CD4-positive, alpha-beta T cell (primary cell): ENCODE measurements at regions of chr7 and their contacts with region 1.

Region 1: DNA sequence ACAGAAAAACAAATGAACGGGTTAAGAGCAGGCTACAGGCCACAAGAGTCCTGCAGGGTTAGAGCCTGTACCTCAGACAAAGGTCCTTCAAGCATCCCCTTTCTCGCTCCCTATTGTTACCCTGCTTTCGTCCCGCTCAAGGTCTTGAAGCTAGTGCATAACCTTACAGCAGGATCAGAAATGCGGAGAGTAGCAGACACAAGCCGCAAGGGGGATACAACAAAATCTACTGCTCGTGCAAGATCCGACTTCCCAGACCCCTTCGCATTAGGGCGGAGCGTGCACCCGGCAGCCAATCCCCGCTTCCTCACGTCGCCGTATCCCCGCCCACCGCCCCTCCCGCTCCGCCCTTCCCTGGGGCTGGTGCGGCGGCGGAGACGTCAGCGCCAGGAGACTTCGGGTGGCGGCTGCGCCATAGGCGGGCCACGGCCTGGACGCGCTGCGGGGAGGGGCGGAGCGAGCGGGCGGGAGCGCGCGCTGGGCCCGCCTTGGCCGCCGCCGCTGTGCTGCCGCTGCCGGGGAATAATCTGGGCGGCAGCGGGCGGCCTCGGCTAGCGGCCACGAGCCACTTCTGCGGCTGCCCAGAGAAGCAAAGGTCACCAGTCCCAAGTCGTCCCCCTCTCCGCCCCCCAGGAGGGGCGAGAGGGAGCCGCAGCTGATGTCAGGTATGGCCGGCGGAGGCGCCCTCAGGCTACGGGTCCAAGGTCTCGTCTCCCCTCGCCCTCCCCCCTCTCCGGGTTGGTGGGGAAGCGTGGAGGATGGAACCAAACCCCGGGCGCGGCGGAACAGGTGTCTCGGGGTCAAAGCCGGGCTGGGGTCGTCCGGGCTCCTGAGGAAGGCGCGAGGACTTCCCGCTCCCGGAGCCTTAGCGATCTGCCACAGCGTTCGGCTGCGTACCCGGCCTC is at the start of gene C1GALT1:
- DNase-seq: peak; percentile 97 to 100 (median 98)
- ATAC-seq: peak; percentile 84
- H3K4me3 ChIP-seq: peak within 1 kb of the TSS; percentile 95
- H3K4me3 Mint-ChIP-seq: peak within 1 kb of the TSS; percentile 94
- H3K27ac ChIP-seq: peak within 1 kb of the TSS; percentile 89 to 91
- H3K27ac Mint-ChIP-seq: no peak within 1 kb of the TSS
- H3K4me1 ChIP-seq: peaks cover 28% of the 10 kb centered on the region
- H3K4me1 Mint-ChIP-seq: peaks cover 8% of the 10 kb centered on the region
- H3K27me3 ChIP-seq: no peaks in the 10 kb centered on the region
- H3K27me3 Mint-ChIP-seq: no peaks in the 10 kb centered on the region
- CTCF ChIP-seq: peak; percentile 48
- total RNA-seq, gene C1GALT1: 49.4 to 51.9 TPM

Region 2: DNA sequence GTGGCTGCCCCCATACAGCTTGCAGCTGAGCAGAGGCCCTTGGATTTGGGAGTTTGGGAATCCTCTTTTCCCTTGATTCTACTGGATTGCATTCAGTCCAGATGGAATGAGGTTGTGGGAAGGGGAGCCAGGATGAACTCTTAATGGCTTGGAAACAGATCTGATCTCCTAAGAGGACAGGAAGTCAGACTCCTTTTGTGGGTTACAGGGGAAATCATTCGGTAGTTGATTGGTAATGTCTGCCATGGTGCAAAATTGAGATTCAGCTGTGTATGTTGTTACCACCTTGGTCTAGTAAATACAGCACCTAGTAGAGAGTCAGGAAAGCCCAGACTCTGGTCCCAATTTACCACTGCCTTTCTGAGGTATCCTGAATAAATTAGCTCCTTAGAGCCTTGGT is 1614.6 kb before region 1 on chr7:
- CTCF ChIA-PET with region 1: no interaction called
- POLR2A ChIA-PET with region 1: no interaction called
- intact Hi-C with region 1: no loop called
- DNase-seq: peak in 3 of 14 experiments; percentile 42 to 52 (median 42)
- ATAC-seq: no peak
- H3K4me3 ChIP-seq: no peak overlapping the region
- H3K4me3 Mint-ChIP-seq: peak overlapping the region; percentile 65
- H3K27ac ChIP-seq: no peak overlapping the region
- H3K27ac Mint-ChIP-seq: no peak overlapping the region
- H3K4me1 ChIP-seq: peaks cover 31% of the 10 kb centered on the region
- H3K4me1 Mint-ChIP-seq: peaks cover 30% of the 10 kb centered on the region
- H3K27me3 ChIP-seq: peaks cover 0 to 4% of the 10 kb centered on the region in 2 experiments
- H3K27me3 Mint-ChIP-seq: peaks cover 3% of the 10 kb centered on the region
- CTCF ChIP-seq: no peak

Region 3: DNA sequence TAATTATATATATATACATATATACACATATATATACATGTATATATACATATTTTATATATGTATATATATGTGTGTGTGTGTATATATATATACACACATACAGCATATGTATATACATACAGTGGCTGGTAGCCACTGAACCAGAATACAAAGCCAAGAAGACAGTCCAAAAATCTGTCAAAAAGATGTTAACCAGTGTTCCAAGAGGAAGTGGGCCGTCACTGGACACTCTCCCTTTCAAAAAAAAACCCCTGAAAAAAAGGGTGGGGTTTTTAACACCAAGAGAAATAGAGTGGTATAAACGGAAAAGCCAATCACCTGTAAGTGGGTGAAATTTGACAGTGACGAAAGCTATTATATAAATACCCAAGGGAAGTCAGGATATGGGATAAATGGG is 31.1 kb before region 1 on chr7:
- CTCF ChIA-PET with region 1: interaction called, 4 read pairs
- POLR2A ChIA-PET with region 1: interaction called, 18 read pairs
- intact Hi-C with region 1: loop called in 1 of 2 experiments (anchors 5 kb)
- DNase-seq: no peak
- ATAC-seq: no peak
- H3K4me3 ChIP-seq: no peak overlapping the region
- H3K4me3 Mint-ChIP-seq: no peak overlapping the region
- H3K27ac ChIP-seq: no peak overlapping the region
- H3K27ac Mint-ChIP-seq: no peak overlapping the region
- H3K4me1 ChIP-seq: peaks cover 5% of the 10 kb centered on the region
- H3K4me1 Mint-ChIP-seq: peaks cover 42% of the 10 kb centered on the region
- H3K27me3 ChIP-seq: no peaks in the 10 kb centered on the region
- H3K27me3 Mint-ChIP-seq: no peaks in the 10 kb centered on the region
- CTCF ChIP-seq: no peak

Region 4: GRCh38 chr7:7201578-7202374 is 19.4 kb after region 1 on chr7:
- CTCF ChIA-PET with region 1: interaction called, 9 read pairs
- POLR2A ChIA-PET with region 1: interaction called, 16 read pairs
- intact Hi-C with region 1: loop called in 1 of 2 experiments (anchors 1 kb)
- DNase-seq: peak; percentile 14 to 69 (median 32)
- ATAC-seq: peak; percentile 95
- H3K4me3 ChIP-seq: peak overlapping the region; percentile 17
- H3K4me3 Mint-ChIP-seq: peak overlapping the region; percentile 54
- H3K27ac ChIP-seq: peak overlapping the region; percentile 13 to 21
- H3K27ac Mint-ChIP-seq: peak overlapping the region; percentile 80
- H3K4me1 ChIP-seq: peaks cover 15% of the 10 kb centered on the region
- H3K4me1 Mint-ChIP-seq: peaks cover 90% of the 10 kb centered on the region
- H3K27me3 ChIP-seq: no peaks in the 10 kb centered on the region
- H3K27me3 Mint-ChIP-seq: no peaks in the 10 kb centered on the region
- CTCF ChIP-seq: no peak

Region 5: GRCh38 chr7:7242899-7243298 is 60.5 kb after region 1 on chr7:
- CTCF ChIA-PET with region 1: interaction called, 3 read pairs
- POLR2A ChIA-PET with region 1: interaction called, 3 read pairs
- intact Hi-C with region 1: loop called in 1 of 2 experiments (anchors 5 kb)
- DNase-seq: no peak
- ATAC-seq: no peak
- H3K4me3 ChIP-seq: no peak overlapping the region
- H3K4me3 Mint-ChIP-seq: no peak overlapping the region
- H3K27ac ChIP-seq: no peak overlapping the region
- H3K27ac Mint-ChIP-seq: no peak overlapping the region
- H3K4me1 ChIP-seq: no peaks in the 10 kb centered on the region
- H3K4me1 Mint-ChIP-seq: peaks cover 70% of the 10 kb centered on the region
- H3K27me3 ChIP-seq: no peaks in the 10 kb centered on the region
- H3K27me3 Mint-ChIP-seq: no peaks in the 10 kb centered on the region
- CTCF ChIP-seq: no peak

Region 6: GRCh38 chr7:7542251-7542835 is 359.9 kb after region 1 on chr7:
- CTCF ChIA-PET with region 1: no interaction called
- POLR2A ChIA-PET with region 1: interaction called, 3 read pairs
- intact Hi-C with region 1: loop called (anchors 1 to 2 kb)
- DNase-seq: no peak
- ATAC-seq: no peak
- H3K4me3 ChIP-seq: no peak overlapping the region
- H3K4me3 Mint-ChIP-seq: no peak overlapping the region
- H3K27ac ChIP-seq: no peak overlapping the region
- H3K27ac Mint-ChIP-seq: no peak overlapping the region
- H3K4me1 ChIP-seq: no peaks in the 10 kb centered on the region
- H3K4me1 Mint-ChIP-seq: no peaks in the 10 kb centered on the region
- H3K27me3 ChIP-seq: no peaks in the 10 kb centered on the region
- H3K27me3 Mint-ChIP-seq: peaks cover 9% of the 10 kb centered on the region
- CTCF ChIP-seq: no peak

Region 7: GRCh38 chr7:8125680-8126444 is 943.5 kb after region 1 on chr7:
- CTCF ChIA-PET with region 1: no interaction called
- POLR2A ChIA-PET with region 1: no interaction called
- intact Hi-C with region 1: loop called in 1 of 2 experiments (anchors 5 kb)
- DNase-seq: peak; percentile 60 to 93 (median 76)
- ATAC-seq: peak; percentile 94
- H3K4me3 ChIP-seq: no peak overlapping the region
- H3K4me3 Mint-ChIP-seq: peak overlapping the region; percentile 56
- H3K27ac ChIP-seq: peak overlapping the region; percentile 74 to 83
- H3K27ac Mint-ChIP-seq: peak overlapping the region; percentile 96
- H3K4me1 ChIP-seq: peaks cover 83% of the 10 kb centered on the region
- H3K4me1 Mint-ChIP-seq: peaks cover 82% of the 10 kb centered on the region
- H3K27me3 ChIP-seq: no peaks in the 10 kb centered on the region
- H3K27me3 Mint-ChIP-seq: no peaks in the 10 kb centered on the region
- CTCF ChIP-seq: no peak